IMR-90 (cell line): ENCODE measurements at regions of chr1 and their contacts with region 1.

Region 1: GRCh38 chr1:84133479-84133878 is 10.6 kb upstream of the PRKACB start:
- DNase-seq: no peak
- ATAC-seq: no peak
- H3K4me3 ChIP-seq: no peak overlapping the region
- H3K27ac ChIP-seq: no peak overlapping the region
- H3K4me1 ChIP-seq: no peaks in the 10 kb centered on the region
- H3K27me3 ChIP-seq: no peaks in the 10 kb centered on the region
- CTCF ChIP-seq: no peak
- POLR2A ChIP-seq: no peak
- RAD21 ChIP-seq: no peak

Region 2: GRCh38 chr1:84478876-84479868 is 345.7 kb after region 1 on chr1 and contains the start of gene RPF1:
- CTCF ChIA-PET with region 1: no interaction called
- POLR2A ChIA-PET with region 1: no interaction called
- dilution Hi-C with region 1: no loop called
- in situ Hi-C with region 1: no loop called
- intact Hi-C with region 1: no loop called
- DNase-seq: peak; percentile 79
- ATAC-seq: peak; percentile 96
- H3K4me3 ChIP-seq: peak within 1 kb of the TSS; percentile 60
- H3K27ac ChIP-seq: peak within 1 kb of the TSS; percentile 78
- H3K4me1 ChIP-seq: peaks cover 3% of the 10 kb centered on the region
- H3K27me3 ChIP-seq: no peaks in the 10 kb centered on the region
- CTCF ChIP-seq: no peak
- POLR2A ChIP-seq: peak; percentile 78
- RAD21 ChIP-seq: no peak; the same call in 1 of the 2 replicates
- total RNA-seq, gene RPF1: 30.3 and 45.3 TPM in 2 replicates

Region 3: GRCh38 chr1:84763912-84764663 is 630.6 kb after region 1 on chr1:
- CTCF ChIA-PET with region 1: no interaction called
- POLR2A ChIA-PET with region 1: no interaction called
- dilution Hi-C with region 1: no loop called
- in situ Hi-C with region 1: loop called (anchors 10 kb)
- intact Hi-C with region 1: no loop called
- DNase-seq: no peak
- ATAC-seq: no peak
- H3K4me3 ChIP-seq: no peak overlapping the region
- H3K27ac ChIP-seq: no peak overlapping the region
- H3K4me1 ChIP-seq: peaks cover 4% of the 10 kb centered on the region
- H3K27me3 ChIP-seq: peaks cover 26% of the 10 kb centered on the region
- CTCF ChIP-seq: no peak
- POLR2A ChIP-seq: no peak
- RAD21 ChIP-seq: no peak

Region 4: GRCh38 chr1:84928979-84929378 is 795.5 kb after region 1 on chr1:
- CTCF ChIA-PET with region 1: no interaction called
- POLR2A ChIA-PET with region 1: no interaction called
- dilution Hi-C with region 1: no loop called
- in situ Hi-C with region 1: loop called (anchors 10 kb)
- intact Hi-C with region 1: no loop called
- DNase-seq: no peak
- ATAC-seq: no peak
- H3K4me3 ChIP-seq: no peak overlapping the region
- H3K27ac ChIP-seq: no peak overlapping the region
- H3K4me1 ChIP-seq: no peaks in the 10 kb centered on the region
- H3K27me3 ChIP-seq: peaks cover 39% of the 10 kb centered on the region
- CTCF ChIP-seq: no peak
- POLR2A ChIP-seq: no peak
- RAD21 ChIP-seq: no peak